ENCODE measurements at regions of chr1 and their contacts with region 1.

Region 1: GRCh38 chr1:241611063-241611462 is 29.1 kb downstream of the CHML start:
- DNase-seq: no peak
- ATAC-seq: peak; percentile 81 to 85
- H3K4me3 ChIP-seq: no peak overlapping the region
- H3K27ac ChIP-seq: no peak overlapping the region
- H3K4me1 ChIP-seq: no peaks in the 10 kb centered on the region
- H3K27me3 ChIP-seq: no peaks in the 10 kb centered on the region

Region 2: GRCh38 chr1:240739139-240739538 is 871.9 kb before region 1 on chr1:
- intact Hi-C with region 1: no loop called
- DNase-seq: no peak
- ATAC-seq: no peak
- H3K4me3 ChIP-seq: no peak overlapping the region
- H3K27ac ChIP-seq: no peak overlapping the region
- H3K4me1 ChIP-seq: no peaks in the 10 kb centered on the region
- H3K27me3 ChIP-seq: no peaks in the 10 kb centered on the region

Region 3: GRCh38 chr1:241531195-241532161 is 79.6 kb before region 1 on chr1:
- intact Hi-C with region 1: loop called in 1 of 4 experiments (anchors 10 kb)
- DNase-seq: no peak
- ATAC-seq: peak; percentile 80 to 84
- H3K4me3 ChIP-seq: peak overlapping the region; percentile 95
- H3K27ac ChIP-seq: no peak overlapping the region
- H3K4me1 ChIP-seq: no peaks in the 10 kb centered on the region
- H3K27me3 ChIP-seq: no peaks in the 10 kb centered on the region

Region 4: DNA sequence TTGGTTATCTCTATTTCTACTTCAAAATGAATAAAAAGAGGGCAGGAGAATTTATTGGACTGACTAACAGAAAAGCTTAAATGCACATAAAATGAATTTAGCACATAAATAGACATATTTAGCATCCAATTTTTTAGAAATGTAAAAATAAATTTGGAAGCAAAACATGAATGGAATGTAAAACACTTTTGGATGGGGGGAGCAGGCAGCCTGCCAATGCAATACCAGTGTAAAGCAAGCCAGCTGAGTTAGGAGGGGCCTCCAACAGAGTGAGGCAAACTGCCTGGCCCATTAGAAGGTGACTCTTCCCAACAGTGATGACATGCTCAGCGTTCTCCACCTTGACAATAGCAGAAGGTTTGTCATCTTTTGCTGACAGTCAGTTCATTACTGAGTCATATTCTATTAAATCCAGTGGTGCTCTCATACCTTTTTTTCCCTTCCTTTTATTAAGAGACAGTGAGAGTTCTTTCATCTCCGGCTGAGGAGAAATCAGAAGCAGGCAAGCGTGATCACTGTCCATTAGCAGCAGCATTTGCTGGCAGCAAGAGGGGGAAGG is 217.5 kb after region 1 on chr1:
- intact Hi-C with region 1: loop called in 2 of 4 experiments (anchors 10 kb)
- DNase-seq: peak in 1 of 3 donors; percentile 34
- ATAC-seq: no peak
- H3K4me3 ChIP-seq: no peak overlapping the region
- H3K27ac ChIP-seq: no peak overlapping the region
- H3K4me1 ChIP-seq: no peaks in the 10 kb centered on the region
- H3K27me3 ChIP-seq: no peaks in the 10 kb centered on the region

Region 5: DNA sequence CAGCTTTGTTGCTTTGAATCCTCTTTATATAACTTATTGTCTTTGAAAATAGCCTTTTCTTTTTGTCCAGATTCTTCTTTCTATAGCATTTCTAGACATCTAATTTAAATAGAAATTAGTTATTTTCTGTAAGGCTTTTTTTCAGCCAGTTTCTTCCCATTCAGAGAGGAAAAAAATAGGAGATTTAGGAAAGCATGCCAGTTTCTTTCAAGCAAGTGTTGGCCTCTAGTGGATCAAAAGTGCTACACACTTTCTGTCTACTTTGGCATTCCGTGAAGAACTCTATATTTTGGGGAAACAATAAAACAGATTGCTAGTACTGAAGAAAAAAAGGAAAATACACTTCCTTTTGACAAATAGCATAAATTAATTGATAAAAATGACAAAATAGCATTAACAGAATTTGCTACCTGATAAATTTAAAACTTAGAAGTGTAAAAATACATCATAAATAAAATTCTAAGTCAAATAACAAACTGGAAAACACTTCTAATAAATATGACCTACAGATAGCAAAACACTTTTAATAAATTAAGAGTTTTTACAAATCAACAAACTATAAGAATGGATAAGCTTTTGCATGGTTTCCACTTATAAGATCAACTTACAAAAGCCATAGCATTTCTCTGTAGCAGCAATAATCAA is 223.8 kb after region 1 on chr1:
- intact Hi-C with region 1: loop called in 2 of 4 experiments (anchors 10 kb)
- DNase-seq: no peak
- ATAC-seq: peak in 1 of 2 donors; percentile 50
- H3K4me3 ChIP-seq: no peak overlapping the region
- H3K27ac ChIP-seq: no peak overlapping the region
- H3K4me1 ChIP-seq: no peaks in the 10 kb centered on the region
- H3K27me3 ChIP-seq: no peaks in the 10 kb centered on the region

Region 6: DNA sequence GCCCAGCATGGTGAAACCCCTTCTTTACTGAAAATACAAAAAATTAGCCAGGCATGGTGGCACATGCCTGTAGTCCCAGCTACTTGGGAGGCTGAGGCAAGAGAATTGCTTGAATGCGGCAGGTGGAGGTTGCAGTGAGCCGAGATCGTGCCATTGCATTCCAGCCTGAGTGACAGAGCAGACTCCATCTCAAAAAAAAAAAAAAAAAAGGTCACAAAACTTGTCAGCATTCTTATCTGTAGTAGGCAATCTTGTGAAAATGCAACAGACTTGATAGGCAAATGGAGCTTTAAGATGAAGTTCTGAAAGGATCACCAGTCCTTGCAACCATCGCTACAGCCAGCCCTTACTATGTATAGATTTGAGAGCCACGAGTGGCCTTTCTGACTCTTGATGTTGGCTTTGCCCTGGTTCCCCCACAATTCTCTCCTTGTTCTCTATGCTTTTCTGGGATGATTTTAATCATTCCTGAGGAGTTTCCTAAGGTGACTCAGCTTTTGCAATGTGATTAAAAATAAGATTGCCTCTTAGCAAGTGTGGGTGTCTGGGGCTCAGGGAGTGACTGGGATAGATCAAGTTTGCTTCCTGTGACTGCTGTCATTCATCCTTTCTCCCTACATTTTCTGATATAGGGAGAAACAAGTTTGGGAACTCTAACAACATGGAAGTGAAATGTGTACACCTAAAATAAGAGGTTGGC is 395.0 kb after region 1 on chr1:
- intact Hi-C with region 1: loop called in 1 of 4 experiments (anchors 10 kb)
- DNase-seq: no peak
- ATAC-seq: no peak
- H3K4me3 ChIP-seq: no peak overlapping the region
- H3K27ac ChIP-seq: no peak overlapping the region
- H3K4me1 ChIP-seq: no peaks in the 10 kb centered on the region
- H3K27me3 ChIP-seq: no peaks in the 10 kb centered on the region